Activated CD8-positive, alpha-beta T cell treated with anti-CD3 and anti-CD28 coated beads for 36 hours (primary cell): ENCODE measurements at regions of chr17 and their contacts with region 1.

Region 1: GRCh38 chr17:48593840-48594537 is 410 bp upstream of the HOXB5 start:
- DNase-seq: peak; percentile 86
- ATAC-seq: peak; percentile 78
- H3K4me3 Mint-ChIP-seq: peak overlapping the region; percentile 67
- H3K27ac Mint-ChIP-seq: no peak overlapping the region
- H3K4me1 Mint-ChIP-seq: peaks cover 35% of the 10 kb centered on the region
- H3K27me3 Mint-ChIP-seq: peaks cover 77% of the 10 kb centered on the region
- CTCF ChIP-seq: peak; percentile 88

Region 2: GRCh38 chr17:48295362-48296288 is 298.4 kb before region 1 on chr17:
- CTCF ChIA-PET with region 1: interaction called, 11 read pairs
- POLR2A ChIA-PET with region 1: interaction called, 4 read pairs
- intact Hi-C with region 1: no loop called
- DNase-seq: no peak
- ATAC-seq: peak; percentile 62
- H3K4me3 Mint-ChIP-seq: peak overlapping the region; percentile 74
- H3K27ac Mint-ChIP-seq: peak overlapping the region; percentile 97
- H3K4me1 Mint-ChIP-seq: peaks cover 67% of the 10 kb centered on the region
- H3K27me3 Mint-ChIP-seq: no peaks in the 10 kb centered on the region
- CTCF ChIP-seq: no peak

Region 3: GRCh38 chr17:48335858-48336500 is 258.0 kb before region 1 on chr17:
- CTCF ChIA-PET with region 1: interaction called, 59 read pairs
- POLR2A ChIA-PET with region 1: no interaction called
- intact Hi-C with region 1: no loop called
- DNase-seq: no peak
- ATAC-seq: peak; percentile 61
- H3K4me3 Mint-ChIP-seq: no peak overlapping the region
- H3K27ac Mint-ChIP-seq: no peak overlapping the region
- H3K4me1 Mint-ChIP-seq: peaks cover 13% of the 10 kb centered on the region
- H3K27me3 Mint-ChIP-seq: no peaks in the 10 kb centered on the region
- CTCF ChIP-seq: peak; percentile 81

Region 4: GRCh38 chr17:48351831-48352332 is 242.1 kb before region 1 on chr17:
- CTCF ChIA-PET with region 1: interaction called, 57 read pairs
- POLR2A ChIA-PET with region 1: no interaction called
- intact Hi-C with region 1: no loop called
- DNase-seq: no peak
- ATAC-seq: peak; percentile 53
- H3K4me3 Mint-ChIP-seq: no peak overlapping the region
- H3K27ac Mint-ChIP-seq: no peak overlapping the region
- H3K4me1 Mint-ChIP-seq: peaks cover 6% of the 10 kb centered on the region
- H3K27me3 Mint-ChIP-seq: no peaks in the 10 kb centered on the region
- CTCF ChIP-seq: peak; percentile 84

Region 5: GRCh38 chr17:48427598-48427997 is 166.4 kb before region 1 on chr17:
- CTCF ChIA-PET with region 1: no interaction called
- POLR2A ChIA-PET with region 1: no interaction called
- intact Hi-C with region 1: no loop called
- DNase-seq: peak; percentile 92
- ATAC-seq: peak; percentile 82
- H3K4me3 Mint-ChIP-seq: peak overlapping the region; percentile 93
- H3K27ac Mint-ChIP-seq: peak overlapping the region; percentile 94
- H3K4me1 Mint-ChIP-seq: peaks cover 63% of the 10 kb centered on the region
- H3K27me3 Mint-ChIP-seq: no peaks in the 10 kb centered on the region
- CTCF ChIP-seq: no peak

Region 6: DNA sequence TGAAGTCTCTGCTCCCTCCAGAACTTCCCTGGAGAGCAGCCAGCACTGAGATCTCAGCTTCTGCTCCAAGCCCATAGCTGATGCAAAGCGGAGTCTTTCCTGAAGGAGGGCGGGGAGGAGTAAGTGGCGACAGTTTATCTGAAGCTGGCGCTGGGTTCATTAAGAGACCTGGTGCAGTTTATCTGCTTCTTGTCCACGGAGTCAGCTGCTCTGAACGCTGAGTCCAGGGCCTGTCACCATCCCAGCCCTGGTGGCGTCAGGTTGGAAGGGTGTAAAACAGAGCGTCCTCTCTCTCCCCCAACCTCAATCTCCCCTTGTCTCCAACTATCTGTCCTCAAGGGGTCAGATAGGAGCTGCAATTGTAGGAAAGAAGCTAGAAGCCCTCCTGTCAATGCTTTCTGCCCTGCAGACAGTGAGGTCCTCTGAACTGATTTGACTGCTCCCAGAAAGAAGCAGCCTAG is 93.0 kb before region 1 on chr17:
- CTCF ChIA-PET with region 1: interaction called, 10 read pairs
- POLR2A ChIA-PET with region 1: no interaction called
- intact Hi-C with region 1: no loop called
- DNase-seq: no peak
- ATAC-seq: no peak
- H3K4me3 Mint-ChIP-seq: no peak overlapping the region
- H3K27ac Mint-ChIP-seq: no peak overlapping the region
- H3K4me1 Mint-ChIP-seq: peaks cover 9% of the 10 kb centered on the region
- H3K27me3 Mint-ChIP-seq: peaks cover 9% of the 10 kb centered on the region
- CTCF ChIP-seq: no peak

Region 7: GRCh38 chr17:48618256-48618897 is 24.4 kb after region 1 on chr17:
- CTCF ChIA-PET with region 1: interaction called, 40 read pairs
- POLR2A ChIA-PET with region 1: interaction called, 3 read pairs
- intact Hi-C with region 1: no loop called
- DNase-seq: peak; percentile 83
- ATAC-seq: peak; percentile 69
- H3K4me3 Mint-ChIP-seq: peak overlapping the region; percentile 46
- H3K27ac Mint-ChIP-seq: no peak overlapping the region
- H3K4me1 Mint-ChIP-seq: peaks cover 32% of the 10 kb centered on the region
- H3K27me3 Mint-ChIP-seq: peaks cover 86% of the 10 kb centered on the region
- CTCF ChIP-seq: peak; percentile 99

Region 8: GRCh38 chr17:48756830-48757251 is 162.9 kb after region 1 on chr17:
- CTCF ChIA-PET with region 1: no interaction called
- POLR2A ChIA-PET with region 1: no interaction called
- intact Hi-C with region 1: no loop called
- DNase-seq: no peak
- ATAC-seq: no peak
- H3K4me3 Mint-ChIP-seq: no peak overlapping the region
- H3K27ac Mint-ChIP-seq: no peak overlapping the region
- H3K4me1 Mint-ChIP-seq: peaks cover 2% of the 10 kb centered on the region
- H3K27me3 Mint-ChIP-seq: peaks cover 74% of the 10 kb centered on the region
- CTCF ChIP-seq: no peak

Region 9: GRCh38 chr17:48791128-48792032 is 197.4 kb after region 1 on chr17:
- CTCF ChIA-PET with region 1: no interaction called
- POLR2A ChIA-PET with region 1: no interaction called
- intact Hi-C with region 1: no loop called
- DNase-seq: peak; percentile 53
- ATAC-seq: peak; percentile 85
- H3K4me3 Mint-ChIP-seq: no peak overlapping the region
- H3K27ac Mint-ChIP-seq: no peak overlapping the region
- H3K4me1 Mint-ChIP-seq: peaks cover 11% of the 10 kb centered on the region
- H3K27me3 Mint-ChIP-seq: peaks cover 18% of the 10 kb centered on the region
- CTCF ChIP-seq: peak; percentile 40